Right ventricle myocardium superior (tissue), 1 donor: ENCODE measurements at regions of chr1 and their contacts with region 1.

Region 1: DNA sequence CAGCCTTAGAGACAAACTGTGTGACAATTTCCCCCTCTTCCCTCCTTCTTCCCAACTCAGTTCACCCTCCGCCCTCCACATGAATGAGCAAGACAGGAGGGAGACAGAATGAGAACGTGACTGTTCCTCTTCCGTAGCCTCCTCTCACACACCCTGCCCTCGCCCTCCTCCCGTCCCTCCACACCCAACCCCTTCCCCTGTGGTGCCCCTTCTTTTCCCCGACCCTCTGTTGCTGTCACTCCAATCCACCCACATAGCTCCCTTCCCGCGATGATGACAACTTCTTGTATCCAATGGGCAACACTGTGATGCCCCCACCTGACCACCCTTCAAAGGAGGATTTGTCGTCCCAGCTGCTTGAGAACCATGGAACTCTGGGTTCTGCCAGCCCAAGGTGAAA is 41.4 kb upstream of the COX20 start:
- DNase-seq: no peak
- ATAC-seq: no peak

Region 2: DNA sequence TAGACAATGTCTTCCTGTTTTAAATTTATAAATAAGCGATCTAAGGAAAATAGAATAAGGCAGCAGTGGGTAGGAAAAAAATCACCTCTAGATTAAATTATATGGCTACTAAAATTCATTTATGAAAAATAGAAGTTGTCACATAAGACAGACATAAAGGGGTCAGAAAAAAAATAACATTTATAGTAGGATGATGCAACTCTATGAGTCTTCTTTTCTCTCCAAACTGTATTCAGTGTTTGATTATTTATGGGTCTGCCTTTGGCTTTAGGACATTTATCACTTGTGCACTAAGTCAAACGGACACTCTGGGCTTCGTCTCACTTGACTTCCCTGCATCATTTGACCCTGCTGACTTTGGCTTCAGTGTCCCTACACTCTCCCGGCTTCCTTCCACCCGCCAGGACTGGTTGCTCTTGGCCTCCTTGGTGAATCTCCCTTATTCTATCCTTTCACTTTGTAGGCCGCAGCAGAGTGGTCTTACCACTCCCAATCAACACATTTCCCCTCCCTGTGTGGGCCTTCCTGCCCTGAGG is 188.2 kb before region 1 on chr1:
- intact Hi-C with region 1: loop called (anchors 2 kb)
- DNase-seq: no peak
- ATAC-seq: no peak